ENCODE measurements at regions of chr3 and their contacts with region 1.

Region 1: GRCh38 chr3:123816673-123817207 is 67.4 kb downstream of the MYLK start:
- DNase-seq: no peak
- ATAC-seq: peak; percentile 22
- H3K4me3 ChIP-seq: no peak overlapping the region
- H3K27ac ChIP-seq: peak overlapping the region; percentile 61 to 81
- H3K4me1 ChIP-seq: peaks cover 2 to 7% of the 10 kb centered on the region in 2 donors
- H3K27me3 ChIP-seq: no peaks in the 10 kb centered on the region

Region 2: DNA sequence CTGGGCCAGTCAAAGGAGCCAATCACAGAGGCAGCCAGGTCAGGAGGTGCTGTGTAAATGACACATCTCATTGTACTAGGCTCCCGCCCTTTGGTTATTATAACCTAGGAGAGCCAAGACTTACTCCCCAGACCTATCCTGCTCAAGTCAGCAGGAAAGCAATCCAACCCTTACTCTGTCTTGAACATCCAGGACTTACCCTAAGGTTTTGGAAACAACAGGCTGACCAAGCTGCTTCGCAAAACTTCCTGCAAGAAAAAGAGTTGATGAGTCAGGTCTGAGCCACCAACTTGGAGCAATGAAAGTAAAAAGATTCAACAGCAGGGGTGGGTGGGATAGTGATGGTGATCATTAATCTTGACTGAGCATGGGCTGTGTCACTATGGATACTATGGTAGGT is 77.0 kb before region 1 on chr3:
- intact Hi-C with region 1: loop called in 1 of 2 experiments (anchors 5 kb)
- DNase-seq: no peak
- ATAC-seq: no peak
- H3K4me3 ChIP-seq: no peak overlapping the region
- H3K27ac ChIP-seq: peak overlapping the region in 1 of 2 donors; percentile 45
- H3K4me1 ChIP-seq: no peaks in the 10 kb centered on the region
- H3K27me3 ChIP-seq: no peaks in the 10 kb centered on the region

Region 3: DNA sequence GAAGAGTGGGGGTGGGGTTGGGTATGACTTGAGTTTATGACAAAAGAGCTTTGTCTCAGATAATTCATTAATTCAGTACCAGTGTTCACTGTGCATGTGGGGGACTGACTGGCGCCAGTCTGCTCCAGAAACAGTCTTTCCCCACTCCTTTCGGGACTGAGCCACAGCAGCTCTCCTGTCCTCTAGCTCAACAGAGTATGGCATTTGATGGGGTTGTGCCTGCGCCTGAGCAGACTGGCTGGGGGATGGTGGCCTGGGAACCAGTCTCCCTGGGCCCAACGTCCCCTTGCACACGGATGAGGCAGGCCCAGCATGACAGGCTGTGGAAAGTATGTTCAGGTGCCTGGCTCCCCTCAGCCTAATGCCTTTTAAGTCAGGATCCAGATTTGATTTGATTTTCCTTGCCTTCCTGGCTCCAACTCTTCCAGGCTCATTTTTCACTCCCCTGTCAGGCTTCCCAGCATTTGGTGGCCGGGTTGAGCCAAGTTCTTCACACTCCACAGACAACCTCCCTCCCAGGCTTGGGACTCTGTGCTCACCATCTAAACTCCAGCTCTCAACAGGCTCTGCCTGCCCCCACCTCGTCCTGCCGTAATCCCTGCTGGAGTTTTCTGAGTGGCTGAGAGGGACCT is 37.6 kb before region 1 on chr3:
- intact Hi-C with region 1: loop called in 1 of 2 experiments (anchors 5 kb)
- DNase-seq: peak; percentile 78 to 84
- ATAC-seq: peak; percentile 82
- H3K4me3 ChIP-seq: no peak overlapping the region
- H3K27ac ChIP-seq: peak overlapping the region; percentile 68 to 90
- H3K4me1 ChIP-seq: peaks cover 2 to 12% of the 10 kb centered on the region in 2 donors
- H3K27me3 ChIP-seq: no peaks in the 10 kb centered on the region

Measured in aorta (tissue), 5 donors.